Endothelial cell of umbilical vein (primary cell): ENCODE measurements at regions of chr7 and their contacts with region 1.

Region 1: DNA sequence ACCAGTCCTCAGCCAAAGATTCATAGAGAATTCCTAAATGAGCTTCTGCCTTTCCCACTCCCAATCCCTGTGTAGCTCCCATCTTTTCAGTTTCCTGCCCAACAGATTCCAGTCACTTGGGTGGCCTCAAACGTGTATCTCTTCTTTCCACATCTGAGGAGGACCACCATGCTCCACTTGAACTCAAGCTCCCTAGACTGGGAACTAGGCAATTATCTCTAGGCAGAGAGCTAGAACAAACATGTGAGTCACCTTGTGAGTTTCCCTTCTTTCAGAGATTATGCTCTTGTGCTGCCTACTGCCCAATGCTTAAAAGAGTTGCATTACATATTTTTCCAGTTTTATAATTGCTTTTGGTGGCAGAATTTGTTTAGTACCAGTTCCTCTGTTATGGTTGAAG is 178.0 kb downstream of the MDFIC start:
- DNase-seq: peak; percentile 88
- H3K4me3 ChIP-seq: no peak overlapping the region
- H3K27ac ChIP-seq: no peak overlapping the region
- H3K4me1 ChIP-seq: peaks cover 25% of the 10 kb centered on the region
- H3K27me3 ChIP-seq: no peaks in the 10 kb centered on the region
- CTCF ChIP-seq: no peak
- POLR2A ChIP-seq: no peak

Region 2: DNA sequence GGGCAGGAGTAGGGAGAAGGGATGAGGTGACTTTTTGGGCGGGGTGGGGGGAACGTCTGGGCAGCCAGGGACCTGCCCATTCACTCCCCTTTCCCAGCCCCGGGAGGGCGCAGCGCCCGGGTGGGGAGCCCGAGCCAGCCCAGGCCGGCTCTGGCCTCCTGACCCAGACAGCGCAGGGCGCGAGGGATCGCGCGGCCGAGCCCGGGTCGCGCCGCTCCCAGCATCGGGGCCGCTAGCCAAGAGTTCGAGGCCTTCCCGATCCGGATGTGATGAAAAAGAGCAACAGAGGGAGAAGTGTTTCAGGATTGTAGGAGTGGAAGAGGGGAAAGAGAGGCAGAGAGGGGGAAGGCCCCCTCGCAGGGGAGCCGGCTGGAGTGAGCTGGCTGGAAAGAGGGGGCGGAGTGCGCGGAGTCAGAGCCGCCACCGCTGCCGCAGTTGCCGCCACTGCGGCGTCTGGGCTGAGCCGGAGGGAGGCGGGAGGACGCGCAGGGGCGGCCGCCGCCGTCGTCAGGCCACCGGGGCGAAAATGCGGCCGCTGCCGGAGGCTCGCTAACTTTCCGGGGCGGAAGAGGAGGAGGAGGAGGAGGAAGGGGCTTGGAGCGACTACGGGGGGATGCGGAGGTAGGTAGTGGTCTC is 177.8 kb before region 1 on chr7 and contains the start of gene MDFIC:
- CTCF ChIA-PET with region 1: no interaction called
- POLR2A ChIA-PET with region 1: no interaction called
- dilution Hi-C with region 1: no loop called
- intact Hi-C with region 1: loop called (anchors 2 kb)
- DNase-seq: peak; percentile 47
- H3K4me3 ChIP-seq: peak within 1 kb of the TSS; percentile 60 to 96 (median 73)
- H3K27ac ChIP-seq: peak within 1 kb of the TSS; percentile 58
- H3K4me1 ChIP-seq: peaks cover 3% of the 10 kb centered on the region
- H3K27me3 ChIP-seq: peaks cover 0 to 2% of the 10 kb centered on the region in 2 experiments
- CTCF ChIP-seq: no peak
- POLR2A ChIP-seq: peak; percentile 62
- total RNA-seq, gene MDFIC: 13.7 and 14.2 TPM in 2 replicates

Region 3: GRCh38 chr7:115087437-115087836 is 12.5 kb before region 1 on chr7:
- CTCF ChIA-PET with region 1: interaction called, 46 read pairs
- POLR2A ChIA-PET with region 1: no interaction called
- dilution Hi-C with region 1: no loop called
- intact Hi-C with region 1: loop called (anchors 1 kb)
- DNase-seq: peak; percentile 97
- H3K4me3 ChIP-seq: no peak overlapping the region
- H3K27ac ChIP-seq: peak overlapping the region; percentile 44
- H3K4me1 ChIP-seq: peaks cover 16% of the 10 kb centered on the region
- H3K27me3 ChIP-seq: no peaks in the 10 kb centered on the region
- CTCF ChIP-seq: no peak
- POLR2A ChIP-seq: no peak

Region 4: DNA sequence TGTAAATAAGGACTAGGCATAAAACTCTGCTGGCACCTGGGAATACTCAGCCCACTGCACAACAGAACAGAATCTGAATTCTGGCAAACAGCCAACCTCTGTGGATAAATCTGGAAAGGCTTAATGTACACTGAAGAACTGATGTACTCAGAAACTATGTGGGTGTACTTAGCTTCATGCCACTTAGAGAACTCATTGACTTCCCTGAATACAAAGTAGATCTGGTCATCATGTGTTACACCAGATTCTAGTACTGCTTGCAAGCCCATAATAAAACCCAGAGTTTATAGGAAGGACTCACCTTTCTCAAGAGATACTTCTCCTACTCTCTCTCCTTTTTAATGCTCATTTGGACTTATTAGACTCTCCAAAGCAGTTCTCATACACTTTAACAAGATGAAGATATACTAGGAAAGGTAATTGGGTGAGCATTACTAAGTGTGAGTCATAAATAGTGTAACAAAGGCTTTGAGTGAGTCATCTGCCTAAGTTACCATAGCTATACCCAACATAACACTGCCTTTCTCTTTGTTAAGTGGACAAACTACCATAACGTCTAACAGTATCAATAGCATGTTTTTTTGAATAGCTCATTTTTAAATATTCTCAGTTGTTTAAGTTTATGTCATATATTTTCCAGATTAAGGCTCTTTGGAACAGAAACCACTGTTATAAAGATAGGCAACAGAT is 131.1 kb after region 1 on chr7:
- CTCF ChIA-PET with region 1: interaction called, 3 read pairs
- POLR2A ChIA-PET with region 1: no interaction called
- dilution Hi-C with region 1: no loop called
- intact Hi-C with region 1: loop called (anchors 5 kb)
- DNase-seq: peak; percentile 93
- H3K4me3 ChIP-seq: no peak overlapping the region
- H3K27ac ChIP-seq: peak overlapping the region; percentile 88
- H3K4me1 ChIP-seq: peaks cover 15% of the 10 kb centered on the region
- H3K27me3 ChIP-seq: no peaks in the 10 kb centered on the region
- CTCF ChIP-seq: no peak
- POLR2A ChIP-seq: no peak